ENCODE measurements at regions of chr3 and their contacts with region 1.

Region 1: DNA sequence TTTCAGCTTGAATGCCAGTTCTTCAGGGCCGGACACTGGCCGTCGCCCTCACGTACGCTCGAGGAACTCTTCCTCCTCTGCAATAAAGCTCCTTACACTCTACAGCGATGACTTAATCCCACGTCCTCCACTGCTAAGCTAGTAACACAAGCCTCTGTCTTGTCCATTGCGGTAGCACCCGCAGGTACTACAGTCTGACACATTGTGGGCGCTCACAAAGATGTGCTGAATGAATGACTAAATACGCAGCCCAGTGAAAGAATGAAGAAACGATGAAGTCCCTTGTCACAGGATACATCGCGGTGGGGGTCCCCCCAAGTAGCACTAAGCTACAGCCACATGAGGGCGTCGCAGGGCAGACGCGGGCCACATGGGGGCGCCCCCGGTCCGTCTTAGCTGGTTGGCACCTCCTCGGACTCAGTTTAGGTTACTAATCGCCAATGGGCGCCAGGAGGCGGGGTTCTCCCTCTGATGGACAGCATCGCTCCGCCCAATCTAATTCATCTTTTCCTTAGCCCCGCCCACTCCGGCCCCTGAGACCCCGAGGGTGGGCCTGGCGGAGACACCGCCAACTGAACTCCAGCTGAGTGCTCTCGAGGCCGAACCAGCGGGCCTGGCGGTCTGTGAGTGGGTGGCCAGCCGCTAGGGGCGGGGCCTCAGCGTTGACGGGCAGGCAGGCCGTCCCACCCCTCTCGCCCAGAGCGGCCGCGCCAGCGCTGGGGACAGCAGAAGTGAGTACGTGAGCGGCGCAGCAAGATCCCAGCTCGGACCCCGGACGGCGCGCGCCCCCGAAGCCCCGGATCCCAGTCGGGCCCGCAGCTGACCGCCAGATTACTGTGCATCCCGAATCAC is at the start of gene EPHB3:
- DNase-seq: peak; percentile 100
- H3K4me3 Mint-ChIP-seq: peak within 1 kb of the TSS; percentile 84
- H3K27ac Mint-ChIP-seq: peak within 1 kb of the TSS; percentile 15
- H3K4me1 Mint-ChIP-seq: peaks cover 51% of the 10 kb centered on the region
- H3K27me3 Mint-ChIP-seq: peaks cover 68% of the 10 kb centered on the region
- CTCF ChIP-seq: peak; percentile 100
- total RNA-seq, gene EPHB3: 2.5 and 2.8 TPM in 2 replicates

Region 2: GRCh38 chr3:183812761-183813445 is 748.4 kb before region 1 on chr3:
- CTCF ChIA-PET with region 1: no interaction called
- intact Hi-C with region 1: no loop called
- DNase-seq: no peak
- H3K4me3 Mint-ChIP-seq: no peak overlapping the region
- H3K27ac Mint-ChIP-seq: no peak overlapping the region
- H3K4me1 Mint-ChIP-seq: no peaks in the 10 kb centered on the region
- H3K27me3 Mint-ChIP-seq: no peaks in the 10 kb centered on the region
- CTCF ChIP-seq: no peak

Region 3: DNA sequence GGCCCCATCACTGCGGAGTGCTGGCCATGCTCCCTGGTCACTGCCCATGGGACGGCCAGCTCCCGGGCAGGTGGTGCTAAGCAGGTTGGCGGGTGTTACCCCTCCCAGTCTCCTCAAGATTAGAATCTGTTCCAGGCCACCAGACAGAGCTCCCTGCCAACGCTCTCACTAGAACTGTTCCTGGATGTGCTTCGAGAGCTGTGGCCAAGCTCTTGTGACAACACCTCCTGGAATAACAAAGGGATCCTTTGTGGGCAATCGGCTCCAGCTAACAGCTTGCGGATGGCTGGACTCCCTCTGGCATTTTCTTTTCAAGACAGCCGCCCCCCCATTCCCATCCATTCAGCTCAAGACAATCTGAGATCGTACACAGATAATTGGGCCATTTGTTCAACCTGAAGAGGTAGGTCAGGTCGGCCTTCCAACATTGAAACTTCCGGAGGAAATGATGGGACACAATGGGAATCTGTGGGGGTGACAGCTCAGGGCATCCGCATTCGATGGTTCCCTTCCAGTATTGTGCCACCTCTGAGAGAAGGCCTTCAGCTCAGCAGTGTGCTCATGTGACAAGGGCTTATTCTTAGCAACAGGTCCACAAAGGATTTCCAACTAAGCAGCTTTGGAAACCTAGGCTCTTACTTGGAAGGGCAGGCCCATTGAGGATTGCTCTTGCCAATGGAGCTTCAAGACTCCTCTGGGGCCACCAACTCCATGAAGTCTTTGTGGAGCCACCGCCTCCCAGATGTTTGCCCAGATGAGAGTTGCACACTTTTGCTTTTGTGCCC is 11.3 kb before region 1 on chr3:
- CTCF ChIA-PET with region 1: interaction called, 15 read pairs
- intact Hi-C with region 1: no loop called
- DNase-seq: no peak
- H3K4me3 Mint-ChIP-seq: no peak overlapping the region
- H3K27ac Mint-ChIP-seq: no peak overlapping the region
- H3K4me1 Mint-ChIP-seq: no peaks in the 10 kb centered on the region
- H3K27me3 Mint-ChIP-seq: peaks cover 76% of the 10 kb centered on the region
- CTCF ChIP-seq: no peak

Region 4: GRCh38 chr3:184626923-184627322 is 65.6 kb after region 1 on chr3:
- CTCF ChIA-PET with region 1: interaction called, 6 read pairs
- intact Hi-C with region 1: loop called (anchors 1 kb)
- DNase-seq: no peak
- H3K4me3 Mint-ChIP-seq: no peak overlapping the region
- H3K27ac Mint-ChIP-seq: no peak overlapping the region
- H3K4me1 Mint-ChIP-seq: no peaks in the 10 kb centered on the region
- H3K27me3 Mint-ChIP-seq: peaks cover 2% of the 10 kb centered on the region
- CTCF ChIP-seq: no peak

Region 5: GRCh38 chr3:184727357-184728009 is 166.2 kb after region 1 on chr3:
- CTCF ChIA-PET with region 1: interaction called, 47 read pairs
- intact Hi-C with region 1: loop called (anchors 1 kb)
- DNase-seq: peak; percentile 70
- H3K4me3 Mint-ChIP-seq: no peak overlapping the region
- H3K27ac Mint-ChIP-seq: no peak overlapping the region
- H3K4me1 Mint-ChIP-seq: no peaks in the 10 kb centered on the region
- H3K27me3 Mint-ChIP-seq: peaks cover 48% of the 10 kb centered on the region
- CTCF ChIP-seq: peak; percentile 89

Region 6: GRCh38 chr3:184748219-184749135 is 187.2 kb after region 1 on chr3:
- CTCF ChIA-PET with region 1: interaction called, 7 read pairs
- intact Hi-C with region 1: loop called (anchors 1 kb)
- DNase-seq: peak; percentile 60
- H3K4me3 Mint-ChIP-seq: no peak overlapping the region
- H3K27ac Mint-ChIP-seq: no peak overlapping the region
- H3K4me1 Mint-ChIP-seq: no peaks in the 10 kb centered on the region
- H3K27me3 Mint-ChIP-seq: peaks cover 75% of the 10 kb centered on the region
- CTCF ChIP-seq: peak; percentile 83

Region 7: DNA sequence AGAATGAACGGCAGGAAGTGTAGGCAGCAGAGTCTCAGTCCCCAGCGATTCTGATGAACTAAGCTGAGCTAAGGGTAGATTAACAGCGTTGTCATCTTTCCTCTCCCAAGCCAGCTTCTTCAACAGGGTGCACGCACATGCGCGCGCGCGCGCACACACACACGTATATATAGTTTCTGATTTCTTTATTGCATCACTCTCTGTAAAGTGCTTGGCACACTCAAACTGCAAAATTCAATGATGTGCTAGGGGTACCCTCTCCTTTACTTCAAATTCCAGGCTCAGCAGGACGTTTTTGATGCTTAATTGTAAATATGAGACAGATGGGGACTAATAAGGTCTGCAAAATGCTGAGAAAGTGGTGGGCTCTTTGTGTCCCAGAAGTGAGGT is 224.6 kb after region 1 on chr3:
- CTCF ChIA-PET with region 1: interaction called, 17 read pairs
- intact Hi-C with region 1: no loop called
- DNase-seq: no peak
- H3K4me3 Mint-ChIP-seq: no peak overlapping the region
- H3K27ac Mint-ChIP-seq: no peak overlapping the region
- H3K4me1 Mint-ChIP-seq: peaks cover 11% of the 10 kb centered on the region
- H3K27me3 Mint-ChIP-seq: peaks cover 25% of the 10 kb centered on the region
- CTCF ChIP-seq: no peak

Measured in Calu3 (cell line).